Activated CD4-positive, alpha-beta memory T cell treated with anti-CD3 and anti-CD28 coated beads for 36 hours (primary cell): ENCODE measurements at regions of chr14 and their contacts with region 1.

Region 1: DNA sequence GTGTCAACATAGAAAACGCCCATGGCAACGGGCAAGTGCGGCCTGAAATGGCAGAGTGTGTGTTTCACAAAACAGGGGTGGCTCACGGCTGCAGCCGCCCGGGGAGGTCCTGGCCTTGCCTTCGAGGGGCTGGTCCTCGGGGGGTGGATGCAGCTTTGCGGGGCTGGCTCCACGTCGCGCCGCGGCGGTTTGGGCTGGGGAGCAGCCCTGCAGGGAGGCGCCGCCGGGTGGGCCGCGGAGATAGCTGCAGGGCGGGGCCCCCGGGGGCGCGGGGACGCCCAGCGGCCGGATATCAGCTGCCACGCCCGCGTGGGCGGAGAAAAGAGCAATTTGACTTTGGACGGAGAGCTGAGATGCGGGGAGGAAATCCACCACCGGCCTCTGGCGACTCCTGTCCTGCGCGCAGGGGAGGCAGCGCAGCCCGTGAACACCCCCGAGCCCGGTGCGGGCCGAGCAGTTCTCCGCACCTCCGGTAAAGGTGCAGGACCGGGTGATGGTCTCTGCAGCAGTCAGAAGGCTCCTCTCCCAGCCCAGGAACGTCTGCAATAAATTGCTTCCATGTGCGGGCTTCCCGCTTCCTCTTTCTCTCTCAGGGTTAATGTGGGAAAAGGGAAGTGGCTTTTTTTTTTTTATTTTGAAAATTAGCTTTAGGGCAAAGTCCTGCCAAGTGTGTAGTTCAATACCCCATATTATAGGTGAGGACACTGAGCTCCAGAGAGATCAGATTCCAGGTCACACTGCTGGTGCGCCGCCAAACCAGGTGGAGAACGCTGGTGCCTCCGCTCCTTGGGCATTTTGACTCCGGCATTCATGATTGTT is 110.5 kb downstream of the ARF6 start:
- DNase-seq: peak; percentile 91
- H3K4me3 Mint-ChIP-seq: peak overlapping the region; percentile 71
- H3K27ac Mint-ChIP-seq: peak overlapping the region; percentile 95
- H3K4me1 Mint-ChIP-seq: peaks cover 49% of the 10 kb centered on the region
- H3K27me3 Mint-ChIP-seq: no peaks in the 10 kb centered on the region

Region 2: DNA sequence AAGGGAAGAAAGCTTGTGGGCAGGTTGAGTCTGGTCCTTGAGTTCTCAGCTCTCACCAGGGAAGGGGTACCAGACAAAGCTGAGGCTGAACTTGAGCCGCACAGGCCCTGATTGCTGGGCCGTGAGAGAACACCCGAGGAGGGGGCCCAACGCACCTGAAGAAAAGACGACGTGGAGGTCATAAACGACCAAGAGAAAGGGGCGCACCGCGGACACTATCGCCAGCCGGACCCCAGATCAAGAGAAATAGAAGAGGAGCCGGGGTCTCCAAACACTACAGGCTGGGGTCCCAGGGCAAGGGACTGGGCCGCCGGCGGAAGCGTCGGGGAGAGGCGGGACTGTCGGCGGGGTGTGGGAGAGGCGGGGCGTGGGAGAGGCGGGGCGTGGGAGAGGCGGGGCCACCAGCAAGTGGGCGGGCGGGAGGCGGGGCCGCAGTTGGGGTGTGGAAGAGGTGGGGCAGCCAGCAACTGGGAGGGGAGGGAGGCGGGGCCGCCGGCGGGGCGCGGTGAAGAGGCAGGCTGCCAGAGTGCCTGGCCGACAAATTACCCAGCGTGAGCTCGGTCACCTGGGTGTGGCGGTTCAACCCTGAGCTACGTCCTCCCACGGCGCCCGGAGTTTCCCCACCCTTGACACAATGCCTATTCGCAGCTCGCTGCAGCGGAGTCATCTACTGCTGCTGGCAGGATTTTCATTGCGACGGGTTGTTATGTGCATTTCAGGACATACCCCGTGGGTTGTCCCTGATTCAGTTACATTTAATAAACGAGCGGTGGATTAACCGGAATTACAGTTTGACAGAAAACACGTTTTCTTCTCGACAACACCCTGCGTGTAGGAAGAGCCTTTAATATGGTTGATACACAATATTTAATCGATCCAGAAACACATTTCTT is 135.3 kb before region 1 on chr14:
- CTCF ChIA-PET with region 1: interaction called, 41 read pairs
- POLR2A ChIA-PET with region 1: interaction called, 83 read pairs
- intact Hi-C with region 1: loop called (anchors 1 kb)
- DNase-seq: peak; percentile 99
- H3K4me3 Mint-ChIP-seq: peak overlapping the region; percentile 94
- H3K27ac Mint-ChIP-seq: peak overlapping the region; percentile 85
- H3K4me1 Mint-ChIP-seq: peaks cover 25% of the 10 kb centered on the region
- H3K27me3 Mint-ChIP-seq: no peaks in the 10 kb centered on the region

Region 3: GRCh38 chr14:49946320-49947141 is 56.9 kb before region 1 on chr14:
- CTCF ChIA-PET with region 1: interaction called, 3 read pairs
- POLR2A ChIA-PET with region 1: interaction called, 6 read pairs
- intact Hi-C with region 1: loop called (anchors 1 kb)
- DNase-seq: peak; percentile 51
- H3K4me3 Mint-ChIP-seq: peak overlapping the region; percentile 24
- H3K27ac Mint-ChIP-seq: peak overlapping the region; percentile 83
- H3K4me1 Mint-ChIP-seq: peaks cover 72% of the 10 kb centered on the region
- H3K27me3 Mint-ChIP-seq: no peaks in the 10 kb centered on the region

Region 4: DNA sequence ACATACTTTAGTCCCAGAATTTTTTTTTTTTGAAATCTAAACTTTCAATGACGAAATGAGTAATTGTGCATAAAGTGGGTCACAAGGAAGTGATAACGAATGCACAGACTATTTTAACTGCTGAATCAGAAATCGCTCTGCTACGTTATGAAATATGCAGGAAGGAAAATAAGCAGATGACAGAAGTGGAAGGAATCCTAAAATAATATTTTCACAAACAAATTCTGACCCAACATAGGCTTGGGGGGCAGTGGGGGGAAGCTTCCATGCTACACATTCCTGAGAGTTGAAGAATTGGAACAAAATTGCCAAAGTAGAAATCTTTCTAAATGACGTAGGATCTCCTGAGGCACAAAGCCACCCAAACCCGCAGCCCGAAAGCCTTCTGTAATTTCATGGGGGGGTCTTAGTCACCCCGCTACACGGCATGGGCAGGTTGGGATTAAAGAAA is 20.9 kb before region 1 on chr14:
- CTCF ChIA-PET with region 1: interaction called, 5 read pairs
- POLR2A ChIA-PET with region 1: interaction called, 77 read pairs
- intact Hi-C with region 1: loop called (anchors 1 kb)
- DNase-seq: peak; percentile 44
- H3K4me3 Mint-ChIP-seq: peak overlapping the region; percentile 54
- H3K27ac Mint-ChIP-seq: peak overlapping the region; percentile 82
- H3K4me1 Mint-ChIP-seq: peaks cover 81% of the 10 kb centered on the region
- H3K27me3 Mint-ChIP-seq: no peaks in the 10 kb centered on the region

Region 5: DNA sequence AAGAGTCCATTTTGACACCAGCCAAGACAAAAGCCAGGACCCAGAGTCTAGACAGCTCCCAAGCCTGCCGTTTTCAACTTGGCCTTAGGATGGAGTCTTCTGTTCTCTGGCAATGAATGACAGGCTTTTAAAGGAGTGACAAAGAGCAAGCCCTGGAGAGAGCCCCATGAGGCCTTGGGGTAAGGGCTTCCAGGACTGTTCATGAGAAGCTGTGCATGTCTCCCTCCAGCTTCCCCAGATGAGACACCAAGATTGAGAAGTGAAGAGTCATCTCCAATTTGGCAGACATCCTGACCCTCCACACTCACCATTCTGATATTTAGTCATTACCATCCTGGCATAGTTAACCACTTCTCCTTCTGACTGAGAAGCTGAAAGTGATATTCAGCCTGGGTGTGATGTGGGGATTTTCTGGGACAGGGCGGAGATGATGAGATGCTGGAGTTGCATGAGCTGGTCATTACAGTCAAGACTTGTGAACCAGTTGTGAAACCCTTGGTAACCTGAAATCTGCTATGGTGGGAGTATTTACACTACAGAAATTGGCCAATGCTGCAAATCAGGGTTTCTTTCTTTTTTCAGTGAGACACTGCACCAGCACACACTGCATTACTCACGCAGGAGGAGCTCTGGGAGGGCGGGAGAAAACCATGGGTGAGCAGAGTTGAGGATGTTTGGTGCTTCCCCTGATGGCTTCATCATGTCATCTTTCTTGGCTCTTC is 35.1 kb after region 1 on chr14:
- CTCF ChIA-PET with region 1: interaction called, 38 read pairs
- POLR2A ChIA-PET with region 1: interaction called, 262 read pairs
- intact Hi-C with region 1: loop called (anchors 1 kb)
- DNase-seq: peak; percentile 90
- H3K4me3 Mint-ChIP-seq: peak overlapping the region; percentile 74
- H3K27ac Mint-ChIP-seq: peak overlapping the region; percentile 99
- H3K4me1 Mint-ChIP-seq: peaks cover 64% of the 10 kb centered on the region
- H3K27me3 Mint-ChIP-seq: no peaks in the 10 kb centered on the region

Region 6: GRCh38 chr14:50109342-50109741 is 105.9 kb after region 1 on chr14:
- CTCF ChIA-PET with region 1: interaction called, 8 read pairs
- POLR2A ChIA-PET with region 1: no interaction called
- intact Hi-C with region 1: loop called (anchors 1 kb)
- DNase-seq: no peak
- H3K4me3 Mint-ChIP-seq: no peak overlapping the region
- H3K27ac Mint-ChIP-seq: no peak overlapping the region
- H3K4me1 Mint-ChIP-seq: peaks cover 46% of the 10 kb centered on the region
- H3K27me3 Mint-ChIP-seq: no peaks in the 10 kb centered on the region

Region 7: GRCh38 chr14:50198499-50198898 is 195.1 kb after region 1 on chr14:
- CTCF ChIA-PET with region 1: no interaction called
- POLR2A ChIA-PET with region 1: no interaction called
- intact Hi-C with region 1: no loop called
- DNase-seq: no peak
- H3K4me3 Mint-ChIP-seq: no peak overlapping the region
- H3K27ac Mint-ChIP-seq: no peak overlapping the region
- H3K4me1 Mint-ChIP-seq: no peaks in the 10 kb centered on the region
- H3K27me3 Mint-ChIP-seq: no peaks in the 10 kb centered on the region

Region 8: GRCh38 chr14:50520947-50521815 is 517.8 kb after region 1 on chr14:
- CTCF ChIA-PET with region 1: no interaction called
- POLR2A ChIA-PET with region 1: no interaction called
- intact Hi-C with region 1: loop called (anchors 1 kb)
- DNase-seq: peak; percentile 84
- H3K4me3 Mint-ChIP-seq: peak overlapping the region; percentile 25
- H3K27ac Mint-ChIP-seq: peak overlapping the region; percentile 85
- H3K4me1 Mint-ChIP-seq: peaks cover 56% of the 10 kb centered on the region
- H3K27me3 Mint-ChIP-seq: no peaks in the 10 kb centered on the region